Endothelial cell of umbilical vein (primary cell): ENCODE measurements at regions of chr12 and their contacts with region 1.

Region 1: GRCh38 chr12:95072900-95073697 is at the start of gene NR2C1:
- DNase-seq: peak; percentile 91
- H3K4me3 ChIP-seq: peak within 1 kb of the TSS; percentile 72 to 88 (median 87)
- H3K27ac ChIP-seq: peak within 1 kb of the TSS; percentile 79
- H3K4me1 ChIP-seq: peaks cover 4% of the 10 kb centered on the region
- H3K27me3 ChIP-seq: no peaks in the 10 kb centered on the region
- CTCF ChIP-seq: no peak
- POLR2A ChIP-seq: peak; percentile 47
- total RNA-seq, gene NR2C1: 36.3 and 37.7 TPM in 2 replicates

Region 2: GRCh38 chr12:95083938-95084337 is 10.8 kb after region 1 on chr12:
- CTCF ChIA-PET with region 1: interaction called, 21 read pairs
- POLR2A ChIA-PET with region 1: interaction called, 3 read pairs
- dilution Hi-C with region 1: no loop called
- intact Hi-C with region 1: no loop called
- DNase-seq: peak; percentile 76
- H3K4me3 ChIP-seq: no peak overlapping the region
- H3K27ac ChIP-seq: no peak overlapping the region
- H3K4me1 ChIP-seq: peaks cover 14% of the 10 kb centered on the region
- H3K27me3 ChIP-seq: no peaks in the 10 kb centered on the region
- CTCF ChIP-seq: no peak
- POLR2A ChIP-seq: no peak

Region 3: GRCh38 chr12:95102916-95103671 is 30.0 kb after region 1 on chr12:
- CTCF ChIA-PET with region 1: interaction called, 4 read pairs
- POLR2A ChIA-PET with region 1: no interaction called
- dilution Hi-C with region 1: no loop called
- intact Hi-C with region 1: loop called (anchors 1 kb)
- DNase-seq: peak; percentile 82
- H3K4me3 ChIP-seq: no peak overlapping the region
- H3K27ac ChIP-seq: peak overlapping the region; percentile 59
- H3K4me1 ChIP-seq: peaks cover 15% of the 10 kb centered on the region
- H3K27me3 ChIP-seq: no peaks in the 10 kb centered on the region
- CTCF ChIP-seq: no peak
- POLR2A ChIP-seq: peak; percentile 36